ENCODE measurements at regions of chr12 and their contacts with region 1.

Region 1: DNA sequence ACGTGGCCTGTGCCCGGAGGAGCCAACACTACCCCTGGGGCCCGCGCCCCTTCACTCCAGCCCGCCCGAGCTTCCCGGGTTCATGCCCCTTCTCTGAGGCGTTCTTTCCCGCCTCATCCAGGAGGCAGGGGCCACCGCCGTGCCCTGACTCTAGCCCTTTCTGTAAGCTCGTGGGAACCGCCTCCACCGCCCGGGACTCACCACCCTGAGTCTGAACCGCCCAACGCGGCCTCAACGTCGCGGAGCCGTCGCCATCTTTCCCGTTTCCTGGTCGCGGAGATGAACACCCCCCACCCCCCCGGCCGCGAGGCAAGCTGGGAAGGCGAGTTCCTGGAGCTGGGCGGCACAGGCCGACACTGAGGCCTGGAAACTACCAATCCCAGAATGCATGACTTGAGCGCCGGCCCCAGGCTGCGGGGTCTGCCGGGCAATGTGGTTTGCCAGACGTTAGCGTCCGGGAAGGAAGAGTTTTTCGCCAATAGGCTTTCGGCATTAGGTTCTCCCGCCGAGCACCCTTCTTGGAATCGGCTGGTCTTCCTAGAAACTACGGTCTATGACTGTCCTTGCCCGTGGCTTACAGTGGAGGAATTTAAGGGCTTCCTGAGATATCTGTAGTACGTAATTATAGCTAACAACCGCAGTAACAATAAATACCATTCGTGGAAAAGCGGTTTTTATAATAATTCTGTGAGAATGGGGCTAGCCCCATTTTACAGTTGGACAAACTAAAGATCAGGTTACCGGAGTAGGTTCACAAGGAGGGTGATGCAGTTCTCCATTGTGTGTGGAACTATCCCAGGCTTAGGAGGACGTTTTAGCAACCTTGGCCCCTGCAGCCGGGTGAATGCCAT is at the start of gene DDX23:
- DNase-seq: peak; percentile 98
- H3K4me3 ChIP-seq: peak within 1 kb of the TSS; percentile 59 to 98 (median 93)
- H3K27ac ChIP-seq: peak within 1 kb of the TSS; percentile 59
- H3K4me1 ChIP-seq: peaks cover 18% of the 10 kb centered on the region
- H3K27me3 ChIP-seq: no peaks in the 10 kb centered on the region
- CTCF ChIP-seq: no peak
- POLR2A ChIP-seq: peak; percentile 81
- total RNA-seq, gene DDX23: 101 and 107 TPM in 2 replicates

Region 2: DNA sequence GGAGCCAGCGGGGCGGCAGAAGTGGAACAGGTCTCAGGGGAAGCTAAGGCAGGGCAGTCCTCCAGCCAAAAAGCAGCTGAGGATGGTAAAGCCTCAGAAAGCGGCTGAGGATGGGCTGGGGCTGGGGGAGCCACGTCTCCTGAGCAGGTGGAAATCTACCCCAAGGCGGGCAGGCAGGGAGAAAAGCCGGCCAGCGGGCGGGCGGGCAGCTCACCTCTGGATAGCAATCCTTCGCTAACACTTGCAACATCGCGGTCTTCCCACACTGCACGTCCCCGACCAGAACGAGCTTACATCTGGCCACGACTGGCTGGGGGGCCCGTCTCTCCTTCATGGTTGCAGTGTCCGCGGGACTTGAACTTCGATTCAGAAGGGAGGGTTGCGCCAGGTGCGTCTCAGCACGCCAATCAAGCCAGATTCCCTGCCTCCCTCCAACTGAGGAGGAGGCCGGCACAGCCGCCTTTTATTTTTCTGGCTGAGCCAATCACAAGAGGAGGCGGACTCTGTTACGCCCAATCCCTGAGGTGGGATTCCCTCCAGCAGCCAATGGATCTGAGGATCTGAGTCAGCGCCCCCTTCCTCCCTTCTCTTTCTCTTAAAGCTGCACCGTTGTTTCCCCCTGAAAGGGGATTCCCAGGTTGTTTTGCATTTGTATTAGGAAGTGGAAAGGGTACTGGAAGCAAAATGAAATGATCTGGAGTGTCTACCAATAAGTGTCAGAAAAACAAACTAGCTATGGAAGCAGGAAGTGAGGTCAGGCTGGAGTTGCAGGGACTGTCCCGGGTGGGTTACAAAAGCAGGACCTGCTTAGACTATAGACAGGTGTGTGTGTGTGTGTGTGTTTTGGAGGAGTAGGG is 13.6 kb after region 1 on chr12 and contains the start of gene RND1:
- CTCF ChIA-PET with region 1: interaction called, 96 read pairs
- POLR2A ChIA-PET with region 1: interaction called, 23 read pairs
- dilution Hi-C with region 1: no loop called
- intact Hi-C with region 1: loop called (anchors 1 kb)
- DNase-seq: peak; percentile 95
- H3K4me3 ChIP-seq: peak within 1 kb of the TSS in 2 of 3 experiments; percentile 43 to 52
- H3K27ac ChIP-seq: no peak within 1 kb of the TSS
- H3K4me1 ChIP-seq: peaks cover 12% of the 10 kb centered on the region
- H3K27me3 ChIP-seq: peaks cover 17% of the 10 kb centered on the region in 2 experiments
- CTCF ChIP-seq: no peak
- POLR2A ChIP-seq: peak; percentile 97
- total RNA-seq, gene RND1: 4.0 and 4.4 TPM in 2 replicates

Region 3: DNA sequence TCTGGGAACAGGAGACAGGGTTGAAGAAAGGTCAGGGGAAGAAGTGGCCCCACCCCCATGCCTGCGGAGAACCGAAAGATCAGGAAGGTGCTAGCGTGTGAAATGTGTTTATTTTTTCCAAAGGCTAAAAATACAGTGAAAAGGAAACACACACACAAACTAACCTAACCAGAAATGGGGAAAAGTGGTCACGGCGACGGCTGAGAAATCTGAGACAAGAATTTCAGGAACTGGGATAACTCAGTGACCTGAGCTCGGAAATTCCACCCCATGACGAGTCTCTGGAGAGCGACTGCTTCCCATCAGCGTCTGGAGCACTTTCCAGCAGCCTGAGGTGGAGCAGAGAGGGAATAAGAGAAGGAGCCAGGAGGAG is 30.2 kb after region 1 on chr12:
- CTCF ChIA-PET with region 1: interaction called, 80 read pairs
- POLR2A ChIA-PET with region 1: no interaction called
- dilution Hi-C with region 1: no loop called
- intact Hi-C with region 1: loop called (anchors 2 kb)
- DNase-seq: peak; percentile 96
- H3K4me3 ChIP-seq: peak overlapping the region in 1 of 3 experiments; percentile 47
- H3K27ac ChIP-seq: peak overlapping the region; percentile 81
- H3K4me1 ChIP-seq: peaks cover 29% of the 10 kb centered on the region
- H3K27me3 ChIP-seq: no peaks in the 10 kb centered on the region
- CTCF ChIP-seq: no peak
- POLR2A ChIP-seq: no peak

Region 4: GRCh38 chr12:48903982-48904411 is 51.9 kb after region 1 on chr12:
- CTCF ChIA-PET with region 1: interaction called, 72 read pairs
- POLR2A ChIA-PET with region 1: no interaction called
- dilution Hi-C with region 1: no loop called
- intact Hi-C with region 1: no loop called
- DNase-seq: peak; percentile 76
- H3K4me3 ChIP-seq: peak overlapping the region in 2 of 3 experiments; percentile 32 to 46
- H3K27ac ChIP-seq: no peak overlapping the region
- H3K4me1 ChIP-seq: peaks cover 3% of the 10 kb centered on the region
- H3K27me3 ChIP-seq: no peaks in the 10 kb centered on the region
- CTCF ChIP-seq: peak; percentile 62 to 77
- POLR2A ChIP-seq: no peak

Region 5: GRCh38 chr12:48936379-48936979 is 84.4 kb after region 1 on chr12:
- CTCF ChIA-PET with region 1: interaction called, 92 read pairs
- POLR2A ChIA-PET with region 1: no interaction called
- dilution Hi-C with region 1: no loop called
- intact Hi-C with region 1: loop called (anchors 1 kb)
- DNase-seq: peak; percentile 64
- H3K4me3 ChIP-seq: no peak overlapping the region
- H3K27ac ChIP-seq: no peak overlapping the region
- H3K4me1 ChIP-seq: no peaks in the 10 kb centered on the region
- H3K27me3 ChIP-seq: no peaks in the 10 kb centered on the region
- CTCF ChIP-seq: peak; percentile 86 to 92
- POLR2A ChIP-seq: no peak

Region 6: DNA sequence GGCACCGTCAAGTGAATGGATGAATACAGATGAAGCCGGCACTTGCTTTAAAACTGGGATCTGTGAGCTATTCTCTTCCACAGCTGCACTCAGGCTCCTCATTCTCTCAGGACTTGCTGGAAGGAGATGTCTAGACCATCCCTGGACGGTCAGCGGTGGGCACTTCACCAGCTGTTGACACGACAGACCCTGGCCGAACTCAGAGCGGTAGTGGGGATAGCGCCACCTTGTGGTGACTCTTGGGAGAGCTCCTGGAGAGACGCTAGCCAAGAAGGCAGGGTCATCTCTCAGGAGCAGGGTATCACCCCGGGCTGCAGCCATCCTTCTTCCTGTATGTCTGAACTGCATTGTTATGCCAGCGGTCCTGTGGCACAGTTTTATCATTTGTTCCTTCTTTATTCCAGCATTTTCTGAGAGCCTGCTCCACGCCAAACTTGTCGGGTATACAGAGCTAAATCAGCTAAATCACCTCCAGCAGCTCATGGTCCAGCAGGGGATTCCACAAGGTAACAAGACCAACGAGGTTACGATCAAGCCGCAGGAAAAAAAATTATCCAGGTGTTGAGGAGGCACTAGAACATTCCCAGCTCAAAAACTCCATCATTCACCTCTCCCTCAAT is 136.0 kb after region 1 on chr12:
- CTCF ChIA-PET with region 1: interaction called, 47 read pairs
- POLR2A ChIA-PET with region 1: no interaction called
- dilution Hi-C with region 1: no loop called
- intact Hi-C with region 1: no loop called
- DNase-seq: peak; percentile 61
- H3K4me3 ChIP-seq: no peak overlapping the region
- H3K27ac ChIP-seq: no peak overlapping the region
- H3K4me1 ChIP-seq: no peaks in the 10 kb centered on the region
- H3K27me3 ChIP-seq: peaks cover 53 to 60% of the 10 kb centered on the region in 2 experiments
- CTCF ChIP-seq: peak; percentile 92 to 93
- POLR2A ChIP-seq: no peak